Gastrocnemius medialis (tissue), 4 donors: ENCODE measurements at regions of chr7 and their contacts with region 1.

Region 1: DNA sequence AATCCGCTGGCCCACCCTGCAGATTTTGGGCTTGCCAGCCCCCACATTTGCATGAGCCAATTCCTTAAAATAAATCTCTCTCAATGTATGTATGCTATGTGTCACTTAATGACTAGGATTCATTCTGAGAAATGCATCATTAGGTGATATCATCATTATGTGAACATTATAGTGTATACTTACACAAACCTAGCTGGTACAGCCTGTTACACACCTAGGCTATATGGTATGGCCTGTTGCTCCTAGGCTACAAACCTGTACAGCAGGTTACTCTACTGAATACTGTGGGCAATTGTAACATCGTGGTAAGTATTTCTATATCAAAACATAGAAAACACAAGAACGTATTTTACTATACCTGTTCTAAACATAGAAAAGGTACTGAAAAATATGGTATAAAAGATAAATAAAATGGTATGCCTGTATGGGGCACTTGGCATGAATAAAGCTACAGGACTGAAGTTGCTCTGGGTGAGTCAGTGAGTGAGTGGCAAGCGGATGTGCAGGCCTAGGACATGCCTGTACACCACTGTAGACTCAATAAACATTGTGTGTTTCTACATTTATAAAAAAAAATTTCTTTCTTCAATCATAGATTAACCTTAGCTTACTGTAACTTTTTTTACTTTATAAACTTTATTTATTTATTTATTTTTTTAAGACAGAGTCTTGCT is 135.9 kb downstream of the ABCA13 start:
- DNase-seq: no peak
- ATAC-seq: no peak
- H3K4me3 ChIP-seq: no peak overlapping the region
- H3K27ac ChIP-seq: no peak overlapping the region
- H3K4me1 ChIP-seq: no peaks in the 10 kb centered on the region
- H3K27me3 ChIP-seq: no peaks in the 10 kb centered on the region
- CTCF ChIP-seq: no peak
- POLR2A ChIP-seq: no peak

Region 2: DNA sequence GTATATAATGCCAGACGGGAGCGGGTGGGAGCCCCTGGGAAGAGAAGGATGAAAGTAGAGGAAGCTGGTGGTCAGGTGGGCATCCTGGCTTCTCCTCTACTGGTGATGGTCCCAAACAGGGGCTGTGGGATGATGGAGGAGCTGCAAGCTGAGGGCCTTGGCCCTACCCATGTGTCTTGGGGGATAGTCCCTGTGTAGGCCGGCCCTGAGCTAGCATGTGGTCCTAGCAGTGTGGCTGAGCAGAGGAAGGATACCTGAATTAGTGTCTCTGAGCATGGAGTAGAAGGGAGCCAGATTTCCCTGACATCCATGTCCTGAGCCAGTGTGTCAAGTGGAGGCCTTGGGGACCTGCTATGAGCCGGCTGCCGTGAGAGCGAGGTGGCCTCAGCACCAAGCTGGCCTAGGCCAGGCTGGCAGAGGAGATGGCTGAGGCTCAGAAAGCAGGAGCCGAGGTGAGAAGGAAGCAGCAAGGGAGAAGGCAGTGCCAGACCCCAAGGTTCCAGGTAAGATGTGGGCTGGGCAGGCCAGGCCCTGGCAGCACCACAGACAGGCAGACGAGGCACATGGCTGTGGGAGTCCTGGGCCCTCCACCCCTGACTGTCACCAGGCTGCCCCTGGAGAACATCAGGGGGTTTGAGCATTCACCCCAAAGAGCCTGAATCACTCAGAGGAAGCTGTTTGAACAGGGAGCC is 14.3 kb after region 1 on chr7:
- in situ Hi-C with region 1: no loop called
- intact Hi-C with region 1: loop called (anchors 1 kb)
- DNase-seq: no peak
- ATAC-seq: no peak
- H3K4me3 ChIP-seq: no peak overlapping the region
- H3K27ac ChIP-seq: no peak overlapping the region
- H3K4me1 ChIP-seq: no peaks in the 10 kb centered on the region
- H3K27me3 ChIP-seq: no peaks in the 10 kb centered on the region
- CTCF ChIP-seq: no peak
- POLR2A ChIP-seq: no peak